ENCODE measurements at regions of chr7 and their contacts with region 1.

Region 1: GRCh38 chr7:131538071-131538790 is 18.2 kb downstream of the PODXL start:
- DNase-seq: peak; percentile 94 to 97
- H3K4me3 ChIP-seq: no peak overlapping the region; the same call in 1 of the 2 replicates
- H3K27ac ChIP-seq: peak overlapping the region; percentile 83
- H3K4me1 ChIP-seq: peaks cover 48% of the 10 kb centered on the region
- H3K27me3 ChIP-seq: no peaks in the 10 kb centered on the region
- CTCF ChIP-seq: no peak

Region 2: DNA sequence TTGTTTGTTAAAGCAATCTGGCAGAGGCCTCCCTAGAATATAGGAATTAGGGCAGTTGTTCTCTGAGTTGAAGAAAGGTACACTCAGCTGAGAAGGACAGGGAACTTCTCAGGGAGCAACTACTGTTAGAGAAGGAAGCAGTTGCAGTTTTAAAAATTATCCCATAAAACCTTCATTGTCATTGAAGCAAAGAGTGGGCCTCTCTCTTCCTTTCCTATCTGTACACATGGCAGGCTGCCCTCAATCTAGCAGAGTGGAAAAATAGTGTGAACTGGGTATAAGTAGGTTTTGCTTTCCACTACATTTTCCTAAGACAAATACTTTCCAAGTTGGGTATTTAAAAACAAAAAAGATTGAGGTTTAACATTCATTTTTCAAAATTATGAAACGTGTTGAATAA is 567.5 kb before region 1 on chr7:
- CTCF ChIA-PET with region 1: interaction called, 13 read pairs
- POLR2A ChIA-PET with region 1: no interaction called
- intact Hi-C with region 1: no loop called
- DNase-seq: no peak
- H3K4me3 ChIP-seq: no peak overlapping the region
- H3K27ac ChIP-seq: peak overlapping the region; percentile 18; the same call in 1 of the 2 replicates
- H3K4me1 ChIP-seq: 0 out of 2 replicates have a peak, but pooled peaks cover 6% of the 10 kb centered on the region
- H3K27me3 ChIP-seq: no peaks in the 10 kb centered on the region
- CTCF ChIP-seq: no peak

Region 3: DNA sequence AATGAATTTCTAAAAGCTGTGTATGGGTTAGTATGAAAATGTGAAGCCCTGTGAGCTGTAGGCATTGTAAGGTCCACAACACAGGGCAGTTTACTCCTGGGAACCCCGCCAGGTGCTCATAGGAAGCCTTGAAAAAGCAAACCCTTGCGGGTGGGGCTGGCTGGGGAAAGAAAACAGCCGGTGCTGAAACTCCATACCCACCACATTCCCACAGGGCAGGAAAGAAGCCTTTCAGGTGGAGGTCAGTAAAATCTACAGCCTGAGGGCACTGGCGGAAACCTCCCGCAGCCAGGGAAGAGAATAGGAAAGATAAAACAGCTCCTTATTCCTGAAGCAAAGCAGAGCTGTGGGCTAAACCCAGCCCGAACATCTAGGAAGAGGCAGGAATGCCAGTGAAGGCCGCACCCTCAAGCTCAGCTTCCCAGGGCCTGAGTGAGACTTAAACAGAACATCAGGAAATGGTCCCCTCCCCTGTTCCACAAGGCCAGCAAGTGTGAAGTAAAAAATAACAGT is 16.5 kb before region 1 on chr7:
- CTCF ChIA-PET with region 1: interaction called, 7 read pairs
- POLR2A ChIA-PET with region 1: interaction called, 3 read pairs
- intact Hi-C with region 1: loop called (anchors 1 kb)
- DNase-seq: peak; percentile 89 to 90
- H3K4me3 ChIP-seq: no peak overlapping the region
- H3K27ac ChIP-seq: peak overlapping the region; percentile 76
- H3K4me1 ChIP-seq: peaks cover 37% of the 10 kb centered on the region
- H3K27me3 ChIP-seq: no peaks in the 10 kb centered on the region
- CTCF ChIP-seq: no peak

Region 4: GRCh38 chr7:131556052-131556908 is 18.0 kb after region 1 on chr7 and contains the start of gene PODXL:
- CTCF ChIA-PET with region 1: no interaction called
- POLR2A ChIA-PET with region 1: no interaction called
- intact Hi-C with region 1: loop called (anchors 1 kb)
- DNase-seq: peak in 1 of 2 experiments; percentile 87
- H3K4me3 ChIP-seq: peak within 1 kb of the TSS; percentile 75
- H3K27ac ChIP-seq: no peak within 1 kb of the TSS
- H3K4me1 ChIP-seq: peaks cover 42% of the 10 kb centered on the region
- H3K27me3 ChIP-seq: no peaks in the 10 kb centered on the region
- CTCF ChIP-seq: no peak
- total RNA-seq, gene PODXL: 57.5 and 75.3 TPM in 2 replicates

Region 5: DNA sequence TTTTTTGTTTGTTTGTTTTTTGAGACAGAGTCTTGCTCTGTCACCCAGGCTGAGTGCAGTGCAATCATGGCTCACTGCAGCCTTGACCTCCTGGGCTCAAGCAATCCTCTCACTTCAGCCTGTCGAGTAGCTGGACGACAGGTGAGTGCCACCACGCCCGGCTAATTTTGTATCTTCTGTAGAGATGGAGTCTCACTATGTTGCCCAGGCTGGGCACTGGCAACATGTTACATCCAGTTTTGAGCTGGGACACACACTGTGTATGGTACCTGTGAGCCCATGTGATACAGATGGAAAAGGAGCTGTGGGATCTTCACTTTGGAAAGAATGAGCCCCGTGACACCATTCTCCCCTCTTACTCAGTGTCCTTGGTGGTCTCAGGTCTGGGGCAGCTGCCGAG is 58.6 kb after region 1 on chr7:
- CTCF ChIA-PET with region 1: no interaction called
- POLR2A ChIA-PET with region 1: interaction called, 24 read pairs
- intact Hi-C with region 1: no loop called
- DNase-seq: no peak
- H3K4me3 ChIP-seq: no peak overlapping the region
- H3K27ac ChIP-seq: no peak overlapping the region
- H3K4me1 ChIP-seq: no peaks in the 10 kb centered on the region
- H3K27me3 ChIP-seq: no peaks in the 10 kb centered on the region
- CTCF ChIP-seq: no peak

Region 6: GRCh38 chr7:131625817-131626372 is 87.7 kb after region 1 on chr7:
- CTCF ChIA-PET with region 1: interaction called, 3 read pairs
- POLR2A ChIA-PET with region 1: interaction called, 20 read pairs
- intact Hi-C with region 1: no loop called
- DNase-seq: peak; percentile 92 to 96
- H3K4me3 ChIP-seq: peak overlapping the region; percentile 18; the same call in 1 of the 2 replicates
- H3K27ac ChIP-seq: peak overlapping the region; percentile 87
- H3K4me1 ChIP-seq: peaks cover 66% of the 10 kb centered on the region
- H3K27me3 ChIP-seq: no peaks in the 10 kb centered on the region
- CTCF ChIP-seq: no peak

Region 7: GRCh38 chr7:131633342-131633843 is 95.2 kb after region 1 on chr7:
- CTCF ChIA-PET with region 1: no interaction called
- POLR2A ChIA-PET with region 1: no interaction called
- intact Hi-C with region 1: loop called (anchors 2 kb)
- DNase-seq: peak; percentile 63 to 99
- H3K4me3 ChIP-seq: no peak overlapping the region
- H3K27ac ChIP-seq: peak overlapping the region; percentile 92
- H3K4me1 ChIP-seq: peaks cover 77% of the 10 kb centered on the region
- H3K27me3 ChIP-seq: no peaks in the 10 kb centered on the region
- CTCF ChIP-seq: no peak